ENCODE measurements at regions of chr9 and their contacts with region 1.

Region 1: GRCh38 chr9:21070171-21070571 is 7.6 kb downstream of the IFNB1 start:
- DNase-seq: peak; percentile 6
- H3K4me3 Mint-ChIP-seq: no peak overlapping the region
- H3K27ac Mint-ChIP-seq: no peak overlapping the region
- H3K4me1 Mint-ChIP-seq: no peaks in the 10 kb centered on the region
- H3K27me3 Mint-ChIP-seq: no peaks in the 10 kb centered on the region
- CTCF ChIP-seq: no peak

Region 2: DNA sequence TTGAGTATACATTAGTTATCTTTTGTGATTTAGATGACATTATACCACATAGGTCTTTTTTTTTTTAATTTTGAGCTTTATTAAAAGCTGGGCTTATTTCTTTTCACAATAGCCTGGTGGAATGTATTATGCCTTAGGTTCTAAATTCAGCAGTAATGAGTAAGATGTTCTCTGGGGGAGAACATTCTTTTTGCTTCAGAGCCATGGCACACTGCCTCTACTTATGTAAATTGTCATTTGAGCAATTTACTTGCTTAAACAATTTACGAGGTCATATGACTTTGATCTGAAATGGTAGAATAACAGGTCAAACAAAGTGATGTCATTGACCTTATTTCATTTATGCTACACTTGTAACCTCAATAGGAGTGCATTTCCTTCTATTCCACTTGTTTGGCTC is 232.0 kb before region 1 on chr9:
- CTCF ChIA-PET with region 1: no interaction called
- intact Hi-C with region 1: no loop called
- DNase-seq: no peak
- H3K4me3 Mint-ChIP-seq: no peak overlapping the region
- H3K27ac Mint-ChIP-seq: no peak overlapping the region
- H3K4me1 Mint-ChIP-seq: peaks cover 13% of the 10 kb centered on the region
- H3K27me3 Mint-ChIP-seq: no peaks in the 10 kb centered on the region
- CTCF ChIP-seq: no peak

Region 3: GRCh38 chr9:21028466-21028865 is 41.7 kb before region 1 on chr9:
- CTCF ChIA-PET with region 1: no interaction called
- intact Hi-C with region 1: loop called (anchors 10 kb)
- DNase-seq: no peak
- H3K4me3 Mint-ChIP-seq: no peak overlapping the region
- H3K27ac Mint-ChIP-seq: no peak overlapping the region
- H3K4me1 Mint-ChIP-seq: no peaks in the 10 kb centered on the region
- H3K27me3 Mint-ChIP-seq: peaks cover 13% of the 10 kb centered on the region
- CTCF ChIP-seq: no peak

Region 4: GRCh38 chr9:21039302-21039701 is 30.9 kb before region 1 on chr9:
- CTCF ChIA-PET with region 1: no interaction called
- intact Hi-C with region 1: loop called (anchors 1 kb)
- DNase-seq: no peak
- H3K4me3 Mint-ChIP-seq: no peak overlapping the region
- H3K27ac Mint-ChIP-seq: no peak overlapping the region
- H3K4me1 Mint-ChIP-seq: no peaks in the 10 kb centered on the region
- H3K27me3 Mint-ChIP-seq: no peaks in the 10 kb centered on the region
- CTCF ChIP-seq: no peak